ENCODE measurements at regions of chr13 and their contacts with region 1.

Region 1: DNA sequence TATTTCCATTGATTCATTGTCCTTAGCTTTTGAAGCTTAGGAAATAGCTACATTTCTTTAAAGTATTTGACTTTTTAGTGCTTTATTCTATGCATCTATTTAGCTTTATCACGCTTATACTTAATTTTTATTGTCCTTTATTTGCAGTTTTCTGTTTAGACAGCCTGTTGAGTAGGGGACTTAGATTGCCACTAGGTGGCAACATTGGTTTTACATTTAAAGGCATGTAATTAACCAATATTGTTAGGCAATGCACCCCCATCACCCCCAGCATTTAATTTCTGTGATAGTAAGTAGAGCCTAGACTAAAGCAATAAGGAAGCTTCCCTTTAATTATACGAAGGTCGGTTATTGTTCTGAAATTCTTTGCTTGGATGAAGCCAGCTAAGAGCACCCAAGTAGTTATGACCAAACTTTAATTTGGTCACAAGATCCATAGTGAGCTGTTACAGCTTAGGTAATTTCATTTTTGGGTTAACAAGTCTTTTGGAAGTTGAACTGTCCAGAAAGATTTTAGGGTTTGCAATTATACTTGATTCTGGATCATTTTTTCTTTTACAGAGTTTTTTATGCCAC is 36.5 kb downstream of the B3GLCT start:
- DNase-seq: no peak
- H3K4me3 ChIP-seq: no peak overlapping the region
- H3K27ac ChIP-seq: no peak overlapping the region
- H3K4me1 ChIP-seq: no peaks in the 10 kb centered on the region
- H3K27me3 ChIP-seq: no peaks in the 10 kb centered on the region
- CTCF ChIP-seq: peak; percentile 40 to 67 (median 45)
- EP300 ChIP-seq: no peak
- POLR2A ChIP-seq: no peak

Region 2: GRCh38 chr13:31424117-31424729 is 187.9 kb after region 1 on chr13:
- intact Hi-C with region 1: loop called (anchors 5 kb)
- DNase-seq: no peak
- H3K4me3 ChIP-seq: no peak overlapping the region
- H3K27ac ChIP-seq: no peak overlapping the region
- H3K4me1 ChIP-seq: peaks cover 4 to 10% (median 9%) of the 10 kb centered on the region in 4 donors
- H3K27me3 ChIP-seq: no peaks in the 10 kb centered on the region
- CTCF ChIP-seq: peak; percentile 70 to 85 (median 74)
- EP300 ChIP-seq: no peak
- POLR2A ChIP-seq: no peak

Measured in esophagus muscularis mucosa (tissue), 4 donors.